H1 (cell line): ENCODE measurements at regions of chr5 and their contacts with region 1.

Region 1: DNA sequence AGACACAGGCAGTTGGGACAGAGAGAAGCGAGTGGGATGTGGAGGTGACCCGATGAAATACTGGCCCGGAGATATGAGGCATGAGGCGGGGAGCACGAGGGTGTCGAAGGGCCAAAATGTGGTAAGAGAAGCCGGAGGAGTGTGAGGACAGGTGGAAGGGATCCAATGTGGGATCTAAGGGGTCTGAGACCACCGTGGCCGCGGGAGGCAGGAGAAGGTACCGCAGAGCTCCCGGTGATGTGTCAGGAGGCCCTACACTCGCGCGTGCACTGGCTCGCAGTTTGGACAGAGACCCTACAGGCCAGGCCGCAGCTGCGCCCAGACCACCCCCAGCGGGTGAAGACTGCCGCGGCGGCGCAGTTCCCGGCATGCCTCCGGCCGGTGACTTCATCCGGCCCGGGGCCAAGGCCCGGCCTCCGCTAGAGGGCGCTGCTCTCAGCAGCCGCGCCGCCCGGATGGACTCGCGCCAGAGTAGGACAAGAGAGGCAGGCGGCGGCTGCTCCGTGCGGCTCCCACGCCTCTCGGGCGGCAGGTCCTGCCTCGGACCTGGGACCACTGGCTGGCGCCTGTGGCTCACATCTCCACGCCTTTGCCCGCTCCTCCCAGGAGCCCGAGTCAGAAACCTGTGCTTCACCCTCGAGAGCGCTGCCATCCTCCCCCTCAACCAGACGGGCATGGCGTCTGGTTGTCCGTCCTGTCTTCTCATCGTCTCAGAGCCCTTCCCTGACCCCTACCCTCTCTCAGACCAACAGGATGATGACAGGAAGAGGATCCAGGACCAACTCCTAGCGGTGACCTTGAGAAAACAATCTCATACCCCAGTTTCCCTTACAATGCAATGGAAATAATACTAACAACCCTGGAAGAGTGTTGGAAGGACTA is 35.4 kb upstream of the STING1 start:
- DNase-seq: peak; percentile 70 to 97
- H3K4me3 ChIP-seq: peak overlapping the region in 3 of 4 experiments; percentile 30 to 55 (median 34); a peak in 6 of 8 replicates
- H3K27ac ChIP-seq: 0 out of 2 replicates have a peak overlapping the region, but pooled peaks have one; percentile 48
- H3K4me1 ChIP-seq: peaks cover 3 to 19% (median 6%) of the 10 kb centered on the region in 4 experiments; a peak in 6 of 7 replicates
- H3K27me3 ChIP-seq: no peaks in the 10 kb centered on the region; a peak in 1 of 7 replicates
- CTCF ChIP-seq: peak; percentile 92 to 97 (median 92)
- EP300 ChIP-seq: no peak; a peak in 1 of 3 replicates
- POLR2A ChIP-seq: peak in 1 of 2 experiments; percentile 94; a peak in 2 of 3 replicates
- RAD21 ChIP-seq: peak; percentile 56 to 78

Region 2: GRCh38 chr5:139354186-139354585 is 163.7 kb before region 1 on chr5:
- CTCF ChIA-PET with region 1: no interaction called
- POLR2A ChIA-PET with region 1: no interaction called
- DNase-seq: no peak
- H3K4me3 ChIP-seq: no peak overlapping the region
- H3K27ac ChIP-seq: no peak overlapping the region
- H3K4me1 ChIP-seq: no peaks in the 10 kb centered on the region
- H3K27me3 ChIP-seq: no peaks in the 10 kb centered on the region
- CTCF ChIP-seq: no peak
- EP300 ChIP-seq: no peak
- POLR2A ChIP-seq: no peak
- RAD21 ChIP-seq: no peak

Region 3: GRCh38 chr5:139422307-139422893 is 95.5 kb before region 1 on chr5:
- CTCF ChIA-PET with region 1: interaction called, 319 read pairs
- POLR2A ChIA-PET with region 1: interaction called, 6 read pairs
- DNase-seq: peak in 1 of 2 experiments; percentile 56
- H3K4me3 ChIP-seq: no peak overlapping the region
- H3K27ac ChIP-seq: no peak overlapping the region
- H3K4me1 ChIP-seq: peaks cover 4 to 9% (median 6%) of the 10 kb centered on the region in 4 experiments; a peak in 4 of 7 replicates
- H3K27me3 ChIP-seq: no peaks in the 10 kb centered on the region
- CTCF ChIP-seq: peak in 2 of 3 experiments; percentile 88 to 94; a peak in 3 of 4 replicates
- EP300 ChIP-seq: no peak
- POLR2A ChIP-seq: no peak
- RAD21 ChIP-seq: peak; percentile 99 to 100

Region 4: DNA sequence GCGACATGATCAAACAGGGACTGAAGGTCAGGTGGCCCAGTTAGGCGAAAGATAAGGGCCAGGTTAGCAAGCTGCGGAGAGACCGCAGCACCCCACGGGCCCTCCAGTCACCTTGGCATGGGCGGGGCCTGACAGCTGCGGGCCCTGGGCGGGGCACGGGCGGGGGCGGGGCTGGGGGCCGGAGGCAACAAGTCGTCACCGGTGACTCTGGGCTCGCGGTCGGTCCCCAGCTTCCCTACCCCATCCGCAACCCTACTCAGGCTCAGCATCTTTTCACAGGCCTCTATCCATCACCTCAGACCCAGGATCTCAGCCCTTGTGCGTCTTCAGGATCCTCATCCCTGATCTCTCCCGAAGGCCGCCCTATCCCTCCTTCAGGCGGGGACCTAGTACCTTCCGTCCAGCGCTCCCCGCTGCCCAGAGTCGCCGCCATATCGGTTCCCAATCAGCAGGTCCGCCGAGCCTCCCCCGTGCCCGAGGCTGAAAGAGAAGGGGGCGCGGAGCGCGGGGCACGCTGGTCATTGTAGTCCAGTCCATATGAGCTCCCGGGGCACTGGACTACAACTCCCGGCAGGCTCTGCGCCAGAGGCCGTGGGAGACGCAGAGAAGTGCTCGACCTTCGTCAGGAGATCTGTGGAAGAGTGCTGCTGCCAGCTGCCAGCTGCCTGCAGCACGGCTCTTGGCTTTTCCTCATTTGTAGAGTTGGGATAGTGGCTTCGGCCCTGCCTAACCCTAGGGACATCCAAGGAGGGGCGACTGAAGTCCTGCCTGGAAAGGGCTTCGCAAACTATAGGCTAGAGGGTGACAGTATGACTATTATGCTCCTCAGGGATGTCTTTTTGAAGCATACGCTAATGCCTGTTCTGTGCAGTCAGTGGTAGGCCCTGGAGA is 78.7 kb before region 1 on chr5 and contains the start of gene DNAJC18:
- CTCF ChIA-PET with region 1: interaction called, 31 read pairs
- POLR2A ChIA-PET with region 1: interaction called, 8 read pairs
- DNase-seq: peak; percentile 76 to 97
- H3K4me3 ChIP-seq: peak within 1 kb of the TSS; percentile 77 to 89 (median 84)
- H3K27ac ChIP-seq: peak within 1 kb of the TSS; percentile 93; the same call in 1 of the 2 replicates
- H3K4me1 ChIP-seq: peaks cover 0 to 8% (median 2%) of the 10 kb centered on the region in 4 experiments; a peak in 4 of 7 replicates
- H3K27me3 ChIP-seq: no peaks in the 10 kb centered on the region
- CTCF ChIP-seq: no peak
- EP300 ChIP-seq: no peak
- POLR2A ChIP-seq: peak; percentile 86 to 87
- RAD21 ChIP-seq: peak in 1 of 2 experiments; percentile 1; a peak in 1 of 4 replicates
- total RNA-seq, gene DNAJC18: 22.0 and 29.2 TPM in 2 replicates

Region 5: GRCh38 chr5:139470821-139471300 is 47.1 kb before region 1 on chr5 and contains the start of gene SMIM33:
- CTCF ChIA-PET with region 1: interaction called, 10 read pairs
- POLR2A ChIA-PET with region 1: no interaction called
- DNase-seq: no peak
- H3K4me3 ChIP-seq: no peak within 1 kb of the TSS
- H3K27ac ChIP-seq: no peak within 1 kb of the TSS
- H3K4me1 ChIP-seq: peaks cover 6 to 33% (median 14%) of the 10 kb centered on the region in 4 experiments
- H3K27me3 ChIP-seq: 0 out of 7 replicates have a peak, but pooled peaks cover 0 to 2% (median 0%) of the 10 kb centered on the region in 4 experiments
- CTCF ChIP-seq: no peak
- EP300 ChIP-seq: no peak
- POLR2A ChIP-seq: no peak
- RAD21 ChIP-seq: no peak
- total RNA-seq, gene SMIM33: not detected in 2 replicates

Region 6: DNA sequence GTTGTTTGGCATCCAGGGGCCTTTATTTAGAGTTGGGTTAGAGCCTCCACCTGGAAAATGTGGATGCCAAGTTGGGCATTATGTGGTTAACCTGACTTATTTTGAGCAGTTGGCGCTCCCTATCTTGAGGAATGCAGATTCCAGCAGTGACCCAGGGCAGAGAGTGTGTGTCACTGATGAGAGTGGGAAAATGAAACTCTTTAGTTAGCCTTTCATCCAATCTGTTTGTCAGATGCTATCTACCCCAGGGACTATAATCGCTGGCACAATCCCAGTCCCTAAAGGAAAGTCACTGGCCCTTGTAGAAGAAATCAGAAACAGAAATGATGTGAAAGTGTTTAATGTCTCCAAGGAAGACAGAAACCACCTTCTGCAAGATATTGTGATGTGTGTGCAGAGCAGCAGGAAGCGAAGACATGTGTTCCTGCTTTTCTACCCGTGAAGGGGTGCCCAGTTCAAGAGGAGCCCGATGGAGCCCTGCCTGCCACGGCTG is 25.2 kb before region 1 on chr5:
- CTCF ChIA-PET with region 1: interaction called, 122 read pairs
- POLR2A ChIA-PET with region 1: no interaction called
- DNase-seq: no peak
- H3K4me3 ChIP-seq: no peak overlapping the region
- H3K27ac ChIP-seq: no peak overlapping the region
- H3K4me1 ChIP-seq: no peaks in the 10 kb centered on the region
- H3K27me3 ChIP-seq: no peaks in the 10 kb centered on the region
- CTCF ChIP-seq: no peak
- EP300 ChIP-seq: no peak
- POLR2A ChIP-seq: no peak
- RAD21 ChIP-seq: no peak

Region 7: GRCh38 chr5:139895647-139896046 is 377.7 kb after region 1 on chr5:
- CTCF ChIA-PET with region 1: no interaction called
- POLR2A ChIA-PET with region 1: no interaction called
- DNase-seq: no peak
- H3K4me3 ChIP-seq: no peak overlapping the region
- H3K27ac ChIP-seq: no peak overlapping the region
- H3K4me1 ChIP-seq: no peaks in the 10 kb centered on the region
- H3K27me3 ChIP-seq: peaks cover 4 to 27% (median 17%) of the 10 kb centered on the region in 4 experiments
- CTCF ChIP-seq: no peak
- EP300 ChIP-seq: no peak
- POLR2A ChIP-seq: no peak
- RAD21 ChIP-seq: no peak